ENCODE measurements at regions of chrX and their contacts with region 1.

Region 1: GRCh38 chrX:76454456-76454927 is 27.0 kb downstream of the MAGEE1 start:
- DNase-seq: peak; percentile 41

Region 2: GRCh38 chrX:76279000-76279399 is 175.5 kb before region 1 on chrX:
- CTCF ChIA-PET with region 1: interaction called, 20 read pairs
- POLR2A ChIA-PET with region 1: no interaction called
- DNase-seq: peak; percentile 50